ENCODE measurements at regions of chr7 and their contacts with region 1.

Region 1: DNA sequence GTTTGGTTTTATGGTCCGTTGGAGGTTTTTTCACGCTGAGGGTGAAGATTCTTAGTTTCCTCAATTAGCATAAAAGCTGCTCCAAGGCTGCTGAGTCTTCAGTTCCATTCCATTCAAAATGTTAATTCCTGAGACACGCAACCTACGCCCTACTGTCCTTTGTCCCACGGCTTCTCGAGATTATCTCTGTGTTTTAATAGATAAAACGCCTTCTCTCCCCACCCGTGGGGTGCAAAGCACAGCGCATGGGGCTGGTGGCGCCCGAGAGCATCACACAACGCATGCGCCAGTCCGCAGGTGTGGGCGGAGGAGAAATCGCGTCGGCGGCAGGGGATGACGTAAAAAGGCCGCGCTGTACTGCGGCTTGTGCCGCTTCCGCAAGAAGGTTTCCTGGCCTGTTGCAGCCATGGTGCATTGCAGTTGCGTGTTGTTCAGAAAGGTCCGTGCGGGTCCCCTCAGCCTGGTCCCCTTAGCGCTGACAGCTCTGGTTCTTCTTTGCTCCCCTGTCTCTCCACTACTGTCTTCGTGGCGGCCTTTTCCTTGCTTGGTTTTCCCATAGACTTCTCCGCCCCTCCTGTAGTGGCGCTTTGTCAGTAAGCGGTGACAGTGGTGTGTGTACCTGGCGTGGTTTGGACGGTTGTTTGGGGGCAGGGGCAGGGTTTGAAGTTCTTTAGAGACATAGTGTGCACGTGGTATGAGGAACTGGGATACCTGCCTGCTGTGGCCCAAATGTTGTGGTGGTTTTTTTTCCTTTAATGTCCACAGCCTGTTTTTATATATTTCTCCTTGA is at the start of gene GTPBP10:
- DNase-seq: peak; percentile 97
- H3K4me3 ChIP-seq: peak within 1 kb of the TSS; percentile 67 to 84 (median 78)
- H3K27ac ChIP-seq: peak within 1 kb of the TSS; percentile 83 to 88 (median 85)
- H3K4me1 ChIP-seq: peaks cover 9 to 21% (median 18%) of the 10 kb centered on the region in 4 donors
- H3K27me3 ChIP-seq: no peaks in the 10 kb centered on the region
- CTCF ChIP-seq: peak; percentile 62 to 85 (median 79)
- EP300 ChIP-seq: no peak
- POLR2A ChIP-seq: no peak
- total RNA-seq, gene GTPBP10: 9.6 to 14.4 (median 12.4) TPM

Region 2: GRCh38 chr7:90403174-90404113 is 56.9 kb after region 1 on chr7 and contains the start of gene CLDN12:
- intact Hi-C with region 1: loop called (anchors 5 kb)
- DNase-seq: peak; percentile 93
- H3K4me3 ChIP-seq: peak within 1 kb of the TSS; percentile 59 to 74 (median 70)
- H3K27ac ChIP-seq: peak within 1 kb of the TSS; percentile 86 to 93 (median 90)
- H3K4me1 ChIP-seq: peaks cover 12 to 21% (median 18%) of the 10 kb centered on the region in 4 donors
- H3K27me3 ChIP-seq: no peaks in the 10 kb centered on the region
- CTCF ChIP-seq: no peak
- EP300 ChIP-seq: no peak
- POLR2A ChIP-seq: no peak
- total RNA-seq, gene CLDN12: 17.6 to 33.6 (median 20.1) TPM

Measured in esophagus muscularis mucosa (tissue), 4 donors.